SK-N-SH (cell line): ENCODE measurements at regions of chr1 and their contacts with region 1.

Region 1: GRCh38 chr1:6108937-6109614 is 63.4 kb downstream of the KCNAB2 start:
- DNase-seq: peak; percentile 83
- H3K4me3 ChIP-seq: no peak overlapping the region
- H3K27ac ChIP-seq: no peak overlapping the region
- H3K4me1 ChIP-seq: peaks cover 0 to 11% of the 10 kb centered on the region in 2 experiments; a peak in 1 of 4 replicates
- H3K27me3 ChIP-seq: no peaks in the 10 kb centered on the region
- CTCF ChIP-seq: peak; percentile 31
- EP300 ChIP-seq: no peak
- RAD21 ChIP-seq: peak; percentile 77

Region 2: DNA sequence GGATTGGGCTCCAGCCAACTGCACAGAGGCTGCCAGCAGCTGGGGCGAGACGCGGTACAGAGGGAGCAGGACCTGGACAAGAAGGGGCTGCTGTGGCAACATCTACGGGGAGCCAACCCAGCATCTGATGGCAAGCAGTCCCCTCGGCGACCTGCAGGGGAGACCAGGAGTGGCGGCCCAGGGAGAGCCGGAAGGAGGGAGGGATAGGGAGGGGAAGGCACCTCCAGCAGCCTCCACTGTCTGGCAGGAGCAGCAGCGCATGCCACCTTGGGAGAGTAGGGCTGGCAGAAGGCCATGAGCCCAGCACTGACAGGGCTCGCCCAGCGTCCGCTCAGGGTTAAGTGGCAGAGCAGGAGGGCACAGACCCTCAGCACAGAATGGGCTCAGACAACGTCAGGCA is 53.7 kb after region 1 on chr1:
- CTCF ChIA-PET with region 1: interaction called, 10 read pairs
- POLR2A ChIA-PET with region 1: no interaction called
- DNase-seq: peak; percentile 90
- H3K4me3 ChIP-seq: no peak overlapping the region
- H3K27ac ChIP-seq: peak overlapping the region in 1 of 2 experiments; percentile 55; a peak in 1 of 4 replicates
- H3K4me1 ChIP-seq: peaks cover 0 to 44% of the 10 kb centered on the region in 2 experiments; a peak in 1 of 4 replicates
- H3K27me3 ChIP-seq: no peaks in the 10 kb centered on the region
- CTCF ChIP-seq: no peak
- EP300 ChIP-seq: no peak
- RAD21 ChIP-seq: no peak

Region 3: DNA sequence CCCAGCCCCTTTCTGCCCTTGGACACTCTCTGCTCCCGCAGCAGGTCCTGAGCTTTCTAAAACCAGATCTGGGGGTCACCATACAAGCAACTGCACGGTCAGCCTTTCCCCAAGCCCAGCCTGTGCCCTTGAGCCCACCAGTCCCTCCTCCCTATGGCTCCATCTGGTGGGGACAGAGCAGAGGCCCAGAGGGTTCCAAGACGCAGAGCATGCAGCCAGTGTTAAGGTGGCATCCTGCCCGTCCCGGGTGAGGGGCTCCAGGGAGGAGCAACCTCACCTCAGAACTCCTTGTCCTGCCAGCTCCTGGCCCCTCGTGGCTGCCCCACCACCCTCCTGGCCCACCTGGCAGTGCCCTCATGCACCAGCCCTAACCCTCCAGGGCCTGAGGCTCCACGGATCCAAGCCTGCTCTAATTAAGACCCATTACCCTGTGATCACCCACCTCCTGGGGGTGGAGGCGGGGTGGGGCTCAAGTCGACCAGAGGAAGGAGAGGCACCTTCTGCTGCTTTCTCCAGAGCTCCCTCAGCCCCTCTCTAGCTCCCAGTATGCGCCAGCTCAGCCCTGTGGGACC is 62.6 kb after region 1 on chr1:
- CTCF ChIA-PET with region 1: interaction called, 57 read pairs
- POLR2A ChIA-PET with region 1: no interaction called
- DNase-seq: peak; percentile 87
- H3K4me3 ChIP-seq: no peak overlapping the region
- H3K27ac ChIP-seq: no peak overlapping the region; a peak in 1 of 4 replicates
- H3K4me1 ChIP-seq: peaks cover 0 to 16% of the 10 kb centered on the region in 2 experiments; a peak in 1 of 4 replicates
- H3K27me3 ChIP-seq: no peaks in the 10 kb centered on the region
- CTCF ChIP-seq: peak; percentile 36
- EP300 ChIP-seq: no peak
- RAD21 ChIP-seq: peak; percentile 64